ENCODE measurements at regions of chr15 and their contacts with region 1.

Region 1: GRCh38 chr15:74373731-74374647 is 6.5 kb upstream of the CYP11A1 start:
- DNase-seq: peak; percentile 96
- H3K4me3 ChIP-seq: peak overlapping the region; percentile 77
- H3K4me3 Mint-ChIP-seq: peak overlapping the region; percentile 77
- H3K27ac Mint-ChIP-seq: no peak overlapping the region
- H3K4me1 ChIP-seq: peaks cover 9% of the 10 kb centered on the region
- H3K4me1 Mint-ChIP-seq: no peaks in the 10 kb centered on the region
- H3K27me3 ChIP-seq: no peaks in the 10 kb centered on the region
- H3K27me3 Mint-ChIP-seq: peaks cover 6% of the 10 kb centered on the region
- CTCF ChIP-seq: peak; percentile 79 to 85

Region 2: DNA sequence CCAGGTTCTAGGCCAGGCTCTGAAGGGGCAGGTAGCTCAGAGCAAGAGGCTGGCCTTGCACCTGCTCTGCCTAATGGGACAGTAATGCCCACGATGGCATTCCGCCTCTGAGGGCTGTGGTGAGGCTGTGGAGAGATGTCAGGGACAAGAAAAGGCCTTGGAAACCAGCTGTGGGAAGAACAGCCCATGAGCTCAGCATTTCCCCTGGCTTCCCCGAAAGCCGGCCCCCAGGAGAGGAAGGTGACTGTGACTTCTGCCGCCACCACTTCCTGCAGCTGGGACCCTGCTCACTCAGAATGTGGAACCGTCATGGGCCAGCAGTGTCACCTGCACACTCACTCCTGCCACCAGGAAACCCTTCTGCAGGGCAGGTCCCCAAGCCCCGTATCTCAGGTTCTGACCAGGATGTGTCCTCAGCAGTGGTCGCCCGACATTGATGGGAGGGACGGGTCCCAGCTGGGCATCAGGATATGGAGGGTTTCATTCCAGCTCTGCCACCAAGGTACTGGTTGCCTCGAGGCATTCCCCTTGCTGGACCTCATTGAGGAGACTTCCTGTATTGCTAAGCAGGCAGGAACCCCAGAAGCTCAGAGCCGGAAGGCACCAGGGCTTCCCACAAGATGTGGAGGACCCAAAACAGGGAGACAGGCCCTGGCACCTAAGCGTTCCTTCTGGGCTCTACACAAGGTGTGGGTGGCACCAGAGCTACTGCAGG is 29.0 kb after region 1 on chr15:
- CTCF ChIA-PET with region 1: no interaction called
- POLR2A ChIA-PET with region 1: no interaction called
- intact Hi-C with region 1: no loop called
- DNase-seq: no peak
- H3K4me3 ChIP-seq: no peak overlapping the region
- H3K4me3 Mint-ChIP-seq: no peak overlapping the region
- H3K27ac Mint-ChIP-seq: no peak overlapping the region
- H3K4me1 ChIP-seq: peaks cover 11% of the 10 kb centered on the region
- H3K4me1 Mint-ChIP-seq: peaks cover 25% of the 10 kb centered on the region
- H3K27me3 ChIP-seq: no peaks in the 10 kb centered on the region
- H3K27me3 Mint-ChIP-seq: no peaks in the 10 kb centered on the region
- CTCF ChIP-seq: no peak

Region 3: DNA sequence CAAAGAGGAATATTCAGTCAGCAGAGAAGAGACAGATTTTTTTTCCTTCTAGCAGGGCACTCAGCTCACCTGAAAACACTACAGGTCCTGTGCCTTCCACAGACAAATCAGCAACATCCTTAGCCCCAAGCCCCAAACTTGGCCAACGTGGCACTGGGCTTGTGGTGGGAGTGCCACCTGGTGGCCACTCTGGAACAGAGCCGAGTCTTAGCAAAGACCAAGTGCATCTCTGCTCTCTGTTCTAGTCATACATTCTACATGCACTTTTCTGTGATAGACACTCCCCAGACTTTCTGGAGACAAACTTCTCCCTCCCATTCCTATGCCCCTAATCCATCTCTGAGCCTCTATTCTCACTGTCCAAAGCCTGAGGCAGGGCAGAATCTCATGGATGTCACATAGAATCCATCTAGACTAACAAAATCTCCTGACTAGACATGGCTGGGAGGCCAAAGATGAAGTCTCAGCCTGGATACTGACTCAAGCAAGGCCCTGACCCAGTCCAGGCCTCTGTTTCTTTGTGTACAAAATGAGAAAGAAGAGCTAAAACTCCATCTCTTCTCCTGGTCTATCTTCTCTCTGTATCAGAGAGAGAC is 64.8 kb after region 1 on chr15:
- CTCF ChIA-PET with region 1: interaction called, 8 read pairs
- POLR2A ChIA-PET with region 1: interaction called, 4 read pairs
- intact Hi-C with region 1: loop called (anchors 2 kb)
- DNase-seq: peak; percentile 77 to 81
- H3K4me3 ChIP-seq: no peak overlapping the region
- H3K4me3 Mint-ChIP-seq: no peak overlapping the region
- H3K27ac Mint-ChIP-seq: peak overlapping the region; percentile 90
- H3K4me1 ChIP-seq: peaks cover 45% of the 10 kb centered on the region
- H3K4me1 Mint-ChIP-seq: peaks cover 45% of the 10 kb centered on the region
- H3K27me3 ChIP-seq: no peaks in the 10 kb centered on the region
- H3K27me3 Mint-ChIP-seq: no peaks in the 10 kb centered on the region
- CTCF ChIP-seq: peak; percentile 81 to 92

Region 4: GRCh38 chr15:74460871-74461846 is 87.2 kb after region 1 on chr15 and contains the start of gene UBL7:
- CTCF ChIA-PET with region 1: interaction called, 14 read pairs
- POLR2A ChIA-PET with region 1: no interaction called
- intact Hi-C with region 1: no loop called
- DNase-seq: peak; percentile 97
- H3K4me3 ChIP-seq: peak within 1 kb of the TSS; percentile 51
- H3K4me3 Mint-ChIP-seq: peak within 1 kb of the TSS; percentile 92
- H3K27ac Mint-ChIP-seq: peak within 1 kb of the TSS; percentile 74
- H3K4me1 ChIP-seq: peaks cover 13% of the 10 kb centered on the region; the same call in 1 of the 2 replicates
- H3K4me1 Mint-ChIP-seq: peaks cover 28% of the 10 kb centered on the region
- H3K27me3 ChIP-seq: no peaks in the 10 kb centered on the region
- H3K27me3 Mint-ChIP-seq: no peaks in the 10 kb centered on the region
- CTCF ChIP-seq: peak in 1 of 2 experiments; percentile 51
- total RNA-seq, gene UBL7: 31.4 and 34.4 TPM in 2 replicates

Region 5: DNA sequence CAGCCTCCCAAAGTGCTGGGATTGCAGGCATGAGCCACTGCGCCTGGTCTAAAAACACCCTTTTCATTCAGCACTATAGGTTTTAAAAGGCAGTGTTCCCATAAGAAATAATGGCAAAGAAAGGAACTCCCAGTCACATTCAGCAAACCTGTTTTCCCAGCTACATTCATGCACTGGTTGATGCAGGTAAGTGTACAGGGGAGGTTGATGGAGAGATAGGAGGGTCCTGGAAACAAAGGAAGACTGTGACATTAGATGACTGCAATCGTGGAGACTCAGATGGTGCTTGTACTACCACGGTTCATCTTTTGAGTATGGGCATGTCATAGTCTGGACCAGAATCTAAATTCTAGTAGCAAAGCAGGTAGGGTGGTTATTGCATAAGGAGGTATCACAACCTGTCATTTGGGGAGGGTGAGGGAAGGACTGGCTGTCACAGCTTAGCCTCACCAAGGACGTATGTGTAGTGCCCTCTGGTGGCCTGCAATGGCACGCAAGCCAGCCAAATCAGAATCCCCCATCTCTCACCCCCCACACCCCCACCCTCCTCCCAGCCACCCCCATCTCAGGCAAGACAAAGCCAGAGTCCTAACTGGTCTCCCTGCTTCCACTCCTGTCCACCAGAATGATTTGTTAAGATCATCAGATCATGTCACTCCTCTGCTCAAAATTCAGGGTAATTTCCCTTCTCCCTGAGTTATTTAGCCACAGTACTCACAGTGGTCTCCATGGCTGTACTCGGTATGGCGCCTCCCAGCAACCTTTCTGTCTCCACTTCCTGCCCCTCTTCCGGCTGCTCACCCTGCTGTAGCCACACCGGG is 115.7 kb after region 1 on chr15:
- CTCF ChIA-PET with region 1: interaction called, 9 read pairs
- POLR2A ChIA-PET with region 1: interaction called, 3 read pairs
- intact Hi-C with region 1: loop called (anchors 1 kb)
- DNase-seq: peak; percentile 66 to 77
- H3K4me3 ChIP-seq: no peak overlapping the region
- H3K4me3 Mint-ChIP-seq: no peak overlapping the region
- H3K27ac Mint-ChIP-seq: no peak overlapping the region
- H3K4me1 ChIP-seq: no peaks in the 10 kb centered on the region
- H3K4me1 Mint-ChIP-seq: no peaks in the 10 kb centered on the region
- H3K27me3 ChIP-seq: no peaks in the 10 kb centered on the region
- H3K27me3 Mint-ChIP-seq: no peaks in the 10 kb centered on the region
- CTCF ChIP-seq: peak; percentile 72 to 86

Region 6: GRCh38 chr15:74615508-74616365 is 241.7 kb after region 1 on chr15 and contains the start of gene CLK3:
- CTCF ChIA-PET with region 1: interaction called, 4 read pairs
- POLR2A ChIA-PET with region 1: no interaction called
- intact Hi-C with region 1: loop called (anchors 5 kb)
- DNase-seq: peak; percentile 95 to 99
- H3K4me3 ChIP-seq: peak within 1 kb of the TSS; percentile 94
- H3K4me3 Mint-ChIP-seq: peak within 1 kb of the TSS; percentile 86
- H3K27ac Mint-ChIP-seq: peak within 1 kb of the TSS; percentile 82
- H3K4me1 ChIP-seq: peaks cover 9% of the 10 kb centered on the region; the same call in 1 of the 2 replicates
- H3K4me1 Mint-ChIP-seq: no peaks in the 10 kb centered on the region
- H3K27me3 ChIP-seq: no peaks in the 10 kb centered on the region
- H3K27me3 Mint-ChIP-seq: no peaks in the 10 kb centered on the region
- CTCF ChIP-seq: no peak
- total RNA-seq, gene CLK3: 49.4 and 54.5 TPM in 2 replicates

Region 7: GRCh38 chr15:74635228-74635627 is 261.2 kb after region 1 on chr15:
- CTCF ChIA-PET with region 1: interaction called, 9 read pairs
- POLR2A ChIA-PET with region 1: no interaction called
- intact Hi-C with region 1: loop called (anchors 1 kb)
- DNase-seq: peak; percentile 66 to 77
- H3K4me3 ChIP-seq: no peak overlapping the region
- H3K4me3 Mint-ChIP-seq: no peak overlapping the region
- H3K27ac Mint-ChIP-seq: peak overlapping the region; percentile 46
- H3K4me1 ChIP-seq: no peaks in the 10 kb centered on the region
- H3K4me1 Mint-ChIP-seq: peaks cover 14% of the 10 kb centered on the region
- H3K27me3 ChIP-seq: no peaks in the 10 kb centered on the region
- H3K27me3 Mint-ChIP-seq: no peaks in the 10 kb centered on the region
- CTCF ChIP-seq: peak; percentile 80 to 82

Measured in Caco-2 (cell line).